B cell (primary cell): ENCODE measurements at regions of chr15 and their contacts with region 1.

Region 1: GRCh38 chr15:51982013-51982769 is 10.6 kb upstream of the LEO1 start:
- DNase-seq: peak; percentile 72
- ATAC-seq: peak; percentile 87
- H3K4me3 ChIP-seq: no peak overlapping the region
- H3K4me3 Mint-ChIP-seq: peak overlapping the region; percentile 17
- H3K27ac ChIP-seq: no peak overlapping the region
- H3K27ac Mint-ChIP-seq: no peak overlapping the region
- H3K4me1 ChIP-seq: peaks cover 6 to 8% of the 10 kb centered on the region in 2 donors
- H3K4me1 Mint-ChIP-seq: peaks cover 9% of the 10 kb centered on the region
- H3K27me3 ChIP-seq: no peaks in the 10 kb centered on the region
- H3K27me3 Mint-ChIP-seq: no peaks in the 10 kb centered on the region
- CTCF ChIP-seq: peak; percentile 76

Region 2: DNA sequence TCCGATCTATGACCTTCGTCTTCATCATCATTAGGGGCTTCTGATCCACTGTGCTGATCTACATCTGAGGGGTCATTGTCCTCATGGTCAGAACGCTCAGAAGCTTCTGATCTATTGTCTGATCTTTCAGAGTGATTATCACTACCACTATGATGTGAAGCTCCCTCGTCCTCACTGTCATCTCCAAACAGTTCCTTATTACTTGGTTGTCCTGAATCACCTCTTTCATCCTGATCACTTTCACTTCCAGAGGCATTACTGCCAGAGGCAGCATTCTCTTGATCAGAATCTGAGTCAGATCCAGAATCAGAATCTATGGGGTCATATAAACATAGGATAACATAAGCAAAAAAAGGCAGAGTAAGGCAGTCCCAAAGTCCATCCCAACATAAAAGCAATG is 16.0 kb before region 1 on chr15:
- CTCF ChIA-PET with region 1: no interaction called
- POLR2A ChIA-PET with region 1: no interaction called
- intact Hi-C with region 1: no loop called
- DNase-seq: no peak
- ATAC-seq: no peak
- H3K4me3 ChIP-seq: no peak overlapping the region
- H3K4me3 Mint-ChIP-seq: no peak overlapping the region
- H3K27ac ChIP-seq: no peak overlapping the region
- H3K27ac Mint-ChIP-seq: no peak overlapping the region
- H3K4me1 ChIP-seq: peaks cover 7% of the 10 kb centered on the region in 2 donors
- H3K4me1 Mint-ChIP-seq: peaks cover 18% of the 10 kb centered on the region
- H3K27me3 ChIP-seq: no peaks in the 10 kb centered on the region
- H3K27me3 Mint-ChIP-seq: no peaks in the 10 kb centered on the region
- CTCF ChIP-seq: no peak

Region 3: DNA sequence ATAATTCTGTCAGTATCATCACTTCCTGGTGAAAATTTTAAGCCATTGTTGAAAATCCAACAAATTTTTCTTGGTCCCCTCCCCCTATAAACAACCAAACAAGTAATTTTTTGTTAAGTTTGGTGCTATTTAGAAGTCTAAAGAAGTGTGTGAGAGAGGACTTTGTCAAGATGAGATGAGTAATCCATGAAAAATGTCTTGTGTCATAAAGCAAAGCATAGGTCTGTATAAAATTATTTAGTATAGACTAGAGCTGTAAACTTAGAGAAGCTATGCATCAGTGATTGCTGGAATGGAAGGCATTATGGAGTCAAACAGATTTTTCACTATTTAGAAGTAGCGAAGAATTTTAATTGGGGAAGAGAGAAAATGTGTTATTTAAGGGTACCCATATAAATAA is 68.2 kb after region 1 on chr15:
- CTCF ChIA-PET with region 1: no interaction called
- POLR2A ChIA-PET with region 1: no interaction called
- intact Hi-C with region 1: loop called (anchors 1 kb)
- DNase-seq: no peak
- ATAC-seq: no peak
- H3K4me3 ChIP-seq: no peak overlapping the region
- H3K4me3 Mint-ChIP-seq: no peak overlapping the region
- H3K27ac ChIP-seq: no peak overlapping the region
- H3K27ac Mint-ChIP-seq: no peak overlapping the region
- H3K4me1 ChIP-seq: peaks cover 4 to 10% of the 10 kb centered on the region in 2 donors
- H3K4me1 Mint-ChIP-seq: peaks cover 15% of the 10 kb centered on the region
- H3K27me3 ChIP-seq: no peaks in the 10 kb centered on the region
- H3K27me3 Mint-ChIP-seq: no peaks in the 10 kb centered on the region
- CTCF ChIP-seq: no peak

Region 4: GRCh38 chr15:52139599-52140491 is 157.7 kb after region 1 on chr15:
- CTCF ChIA-PET with region 1: interaction called, 4 read pairs
- POLR2A ChIA-PET with region 1: no interaction called
- intact Hi-C with region 1: loop called (anchors 1 kb)
- DNase-seq: peak; percentile 73
- ATAC-seq: no peak
- H3K4me3 ChIP-seq: no peak overlapping the region
- H3K4me3 Mint-ChIP-seq: no peak overlapping the region
- H3K27ac ChIP-seq: no peak overlapping the region
- H3K27ac Mint-ChIP-seq: no peak overlapping the region
- H3K4me1 ChIP-seq: peaks cover 19 to 26% of the 10 kb centered on the region in 2 donors
- H3K4me1 Mint-ChIP-seq: peaks cover 19% of the 10 kb centered on the region
- H3K27me3 ChIP-seq: no peaks in the 10 kb centered on the region
- H3K27me3 Mint-ChIP-seq: no peaks in the 10 kb centered on the region
- CTCF ChIP-seq: peak; percentile 92